ENCODE measurements at regions of chr11 and their contacts with region 1.

Region 1: GRCh38 chr11:9663699-9664275 is at the start of gene SWAP70:
- DNase-seq: peak; percentile 92 to 96 (median 92)
- ATAC-seq: peak; percentile 83 to 98 (median 96)
- H3K4me3 ChIP-seq: peak within 1 kb of the TSS; percentile 74 to 99 (median 94)
- H3K27ac ChIP-seq: peak within 1 kb of the TSS; percentile 87 to 98 (median 94)
- H3K4me1 ChIP-seq: peaks cover 0 to 45% (median 5%) of the 10 kb centered on the region in 12 donors
- H3K27me3 ChIP-seq: no peaks in the 10 kb centered on the region
- CTCF ChIP-seq: peak in 11 of 12 donors; percentile 26 to 65 (median 43)
- POLR2A ChIP-seq: peak in 1 of 2 donors; percentile 67
- total RNA-seq, gene SWAP70: 16.7 to 38.5 (median 24.0) TPM

Region 2: DNA sequence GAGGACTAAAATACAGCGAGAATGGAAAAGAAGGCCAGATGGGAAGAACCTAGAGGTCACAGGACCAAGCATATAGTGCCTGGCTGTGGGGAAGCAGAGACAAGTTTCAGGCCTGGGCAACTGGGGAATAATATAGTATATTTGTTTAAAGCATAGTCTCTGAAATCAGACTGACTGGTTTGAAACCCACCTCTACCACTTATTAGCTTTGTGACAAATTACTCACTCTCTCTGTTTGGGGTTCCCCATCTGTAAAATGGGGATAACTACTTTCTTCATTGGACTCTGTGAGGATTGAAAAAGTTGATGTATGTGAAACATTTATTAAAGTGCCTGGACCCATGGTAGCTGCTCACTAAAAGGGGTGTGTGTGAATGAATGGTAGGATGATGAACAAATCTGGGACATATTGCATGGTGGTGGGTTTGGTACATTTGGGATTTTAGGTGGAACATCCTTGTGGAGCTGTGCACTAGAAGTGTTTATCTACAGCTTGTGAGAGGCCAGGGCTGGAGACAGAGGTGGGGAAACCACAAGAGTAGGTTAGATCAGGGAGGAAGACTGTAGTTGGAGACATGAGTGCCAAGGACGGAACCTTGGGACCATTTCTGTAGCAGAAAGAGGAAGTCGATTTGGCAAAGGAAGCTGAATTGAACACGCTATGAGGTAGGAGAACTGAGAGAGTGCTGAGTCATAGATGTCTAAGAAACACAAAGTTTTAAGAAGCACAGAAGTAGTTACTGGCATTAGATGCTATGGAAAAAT is 52.7 kb after region 1 on chr11:
- intact Hi-C with region 1: loop called in 1 of 10 experiments (anchors 5 kb)
- DNase-seq: peak in 3 of 5 donors; percentile 51 to 64 (median 55)
- ATAC-seq: peak; percentile 71 to 90 (median 86)
- H3K4me3 ChIP-seq: no peak overlapping the region
- H3K27ac ChIP-seq: peak overlapping the region in 11 of 12 donors; percentile 19 to 82 (median 63)
- H3K4me1 ChIP-seq: peaks cover 0 to 75% (median 49%) of the 10 kb centered on the region in 12 donors
- H3K27me3 ChIP-seq: no peaks in the 10 kb centered on the region
- CTCF ChIP-seq: no peak
- POLR2A ChIP-seq: no peak

Measured in heart left ventricle (tissue), 16 donors.